PC-3 (cell line): ENCODE measurements at regions of chr2 and their contacts with region 1.

Region 1: GRCh38 chr2:72887754-72888437 is 688 bp downstream of the SPR start:
- DNase-seq: peak; percentile 91
- ATAC-seq: peak; percentile 64
- H3K4me3 ChIP-seq: peak overlapping the region; percentile 92
- H3K27ac ChIP-seq: peak overlapping the region; percentile 60
- H3K4me1 ChIP-seq: peaks cover 26% of the 10 kb centered on the region
- H3K27me3 ChIP-seq: no peaks in the 10 kb centered on the region
- CTCF ChIP-seq: peak; percentile 90

Region 2: DNA sequence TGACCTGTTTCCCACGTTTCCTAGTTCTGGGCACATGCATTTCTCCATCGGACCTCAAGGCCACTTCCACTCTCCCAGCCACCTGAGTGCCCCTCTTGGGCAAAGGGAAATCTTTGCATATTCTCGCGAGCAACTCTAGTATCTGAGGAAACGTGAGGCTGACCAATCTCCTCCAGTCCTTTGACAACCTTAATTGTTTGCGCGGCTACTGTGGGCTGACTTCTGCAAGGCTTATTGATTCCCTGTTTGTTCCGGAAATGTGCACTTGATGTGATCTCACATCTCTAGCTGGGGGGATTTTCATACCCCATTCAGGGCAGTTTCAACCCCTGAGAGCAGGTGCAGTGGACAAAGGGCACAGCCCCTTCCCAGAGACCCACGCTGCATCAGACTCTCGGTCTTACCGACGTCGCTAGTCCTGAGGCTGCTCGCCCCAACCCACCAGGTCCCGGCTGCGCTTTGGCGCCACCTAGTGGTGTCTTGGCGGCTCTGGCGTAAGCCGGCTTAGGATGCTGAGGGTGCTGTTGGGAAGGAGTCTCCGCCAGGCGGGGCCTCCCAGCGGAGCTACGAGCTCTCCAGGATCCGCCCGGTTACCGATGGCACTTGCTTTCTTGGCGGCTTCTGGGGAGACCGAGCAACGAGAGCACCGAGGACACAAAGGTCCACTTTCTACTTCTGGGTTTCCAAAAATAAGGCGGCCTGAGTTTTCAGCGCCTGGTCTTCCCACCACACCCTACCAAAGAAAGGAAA is 25.5 kb before region 1 on chr2:
- CTCF ChIA-PET with region 1: interaction called, 5 read pairs
- POLR2A ChIA-PET with region 1: no interaction called
- intact Hi-C with region 1: loop called (anchors 2 kb)
- DNase-seq: peak; percentile 97
- ATAC-seq: peak; percentile 96
- H3K4me3 ChIP-seq: peak overlapping the region; percentile 71
- H3K27ac ChIP-seq: no peak overlapping the region
- H3K4me1 ChIP-seq: peaks cover 19% of the 10 kb centered on the region
- H3K27me3 ChIP-seq: 0 out of 2 replicates have a peak, but pooled peaks cover 7% of the 10 kb centered on the region
- CTCF ChIP-seq: peak; percentile 97

Region 3: GRCh38 chr2:72934683-72935610 is 47.1 kb after region 1 on chr2:
- CTCF ChIA-PET with region 1: interaction called, 3 read pairs
- POLR2A ChIA-PET with region 1: no interaction called
- intact Hi-C with region 1: loop called (anchors 1 kb)
- DNase-seq: peak; percentile 51
- ATAC-seq: peak; percentile 31
- H3K4me3 ChIP-seq: no peak overlapping the region
- H3K27ac ChIP-seq: no peak overlapping the region
- H3K4me1 ChIP-seq: peaks cover 9% of the 10 kb centered on the region
- H3K27me3 ChIP-seq: no peaks in the 10 kb centered on the region
- CTCF ChIP-seq: peak; percentile 61

Region 4: GRCh38 chr2:72989770-72990556 is 102.1 kb after region 1 on chr2:
- CTCF ChIA-PET with region 1: no interaction called
- POLR2A ChIA-PET with region 1: no interaction called
- intact Hi-C with region 1: no loop called
- DNase-seq: no peak
- ATAC-seq: no peak
- H3K4me3 ChIP-seq: no peak overlapping the region
- H3K27ac ChIP-seq: no peak overlapping the region
- H3K4me1 ChIP-seq: no peaks in the 10 kb centered on the region
- H3K27me3 ChIP-seq: no peaks in the 10 kb centered on the region
- CTCF ChIP-seq: no peak

Region 5: DNA sequence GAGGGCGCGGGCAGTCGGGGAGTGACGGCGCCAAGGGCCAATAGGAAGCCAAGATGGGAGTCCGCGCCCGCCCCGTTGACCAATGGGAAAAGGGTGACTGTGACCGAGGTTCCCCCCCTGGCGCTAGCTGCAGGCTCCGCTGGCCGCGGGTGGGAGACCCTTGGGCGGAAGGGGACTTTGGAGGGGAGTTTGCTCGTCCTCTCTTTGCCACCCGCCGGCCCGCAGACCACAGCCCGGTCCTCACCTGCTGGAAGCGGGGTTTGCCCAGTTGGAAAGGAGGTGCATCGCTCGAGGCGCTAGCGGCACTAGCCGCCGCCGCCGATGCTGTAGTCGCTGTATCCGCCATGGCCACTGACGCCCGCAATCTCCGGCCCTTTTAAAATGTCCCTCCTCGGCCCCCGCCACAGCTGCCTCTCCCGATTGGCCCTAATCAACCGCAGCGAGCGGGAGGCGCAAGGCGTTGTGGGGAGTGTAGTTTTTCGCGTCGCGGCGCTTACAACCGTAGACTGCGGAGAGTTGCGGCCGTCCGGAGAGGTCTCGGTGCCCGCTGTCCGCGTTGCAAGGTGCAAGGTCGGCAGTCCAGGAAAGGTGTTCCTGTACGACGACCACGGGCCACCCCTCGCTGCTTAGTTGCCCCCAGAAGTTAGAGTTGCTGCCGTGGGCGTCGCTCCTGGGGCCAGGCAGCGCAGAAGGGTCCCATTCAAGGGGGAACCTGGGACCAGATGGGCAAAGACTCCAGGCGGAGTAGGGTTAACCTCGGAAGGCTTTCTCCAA is 183.7 kb after region 1 on chr2 and contains the start of gene SFXN5:
- CTCF ChIA-PET with region 1: no interaction called
- POLR2A ChIA-PET with region 1: no interaction called
- intact Hi-C with region 1: loop called (anchors 5 kb)
- DNase-seq: peak; percentile 94
- ATAC-seq: peak; percentile 91
- H3K4me3 ChIP-seq: peak within 1 kb of the TSS; percentile 99
- H3K27ac ChIP-seq: peak within 1 kb of the TSS; percentile 63
- H3K4me1 ChIP-seq: peaks cover 22% of the 10 kb centered on the region
- H3K27me3 ChIP-seq: no peaks in the 10 kb centered on the region
- CTCF ChIP-seq: no peak
- total RNA-seq, gene SFXN5: 22.0 and 30.7 TPM in 2 replicates

Region 6: DNA sequence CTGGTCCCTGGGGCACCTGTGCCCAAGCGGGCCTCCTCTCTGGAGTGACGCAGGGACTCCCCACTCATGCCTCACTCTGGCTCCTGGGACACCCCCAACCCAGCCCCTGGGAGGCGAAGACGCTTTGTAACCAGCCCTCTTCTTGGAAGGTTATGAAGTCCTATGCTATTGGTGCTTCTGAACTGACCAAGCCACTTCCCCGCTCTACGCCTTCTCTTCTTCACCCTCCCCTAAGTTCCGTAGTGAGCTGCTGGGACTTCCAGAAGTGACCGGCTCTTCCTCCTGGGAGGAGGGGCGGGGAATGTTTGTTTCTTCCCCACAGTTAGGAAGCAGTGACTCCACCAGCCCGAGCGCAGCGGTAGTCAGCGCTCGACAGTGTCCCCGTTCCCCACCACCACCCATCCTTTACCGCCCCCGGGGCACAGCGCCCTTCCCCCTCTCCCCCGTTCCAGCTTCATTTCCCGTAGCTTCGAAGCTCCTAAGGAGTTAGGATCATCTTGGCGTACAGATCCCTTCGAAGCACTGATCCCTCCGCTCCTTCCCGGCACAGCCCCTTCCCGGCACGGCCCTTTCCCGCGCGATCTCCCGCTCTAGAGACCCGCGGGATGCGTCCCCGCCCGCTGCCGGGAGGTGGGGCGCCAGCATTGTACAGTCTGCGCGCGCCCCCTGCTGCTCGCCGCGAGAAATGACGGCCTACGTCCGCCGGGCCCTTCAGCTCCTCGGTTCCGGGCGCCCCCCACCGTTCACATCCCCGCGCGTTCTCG is 289.2 kb after region 1 on chr2:
- CTCF ChIA-PET with region 1: interaction called, 16 read pairs
- POLR2A ChIA-PET with region 1: no interaction called
- intact Hi-C with region 1: loop called (anchors 1 kb)
- DNase-seq: peak; percentile 85
- ATAC-seq: peak; percentile 82
- H3K4me3 ChIP-seq: peak overlapping the region; percentile 75
- H3K27ac ChIP-seq: no peak overlapping the region
- H3K4me1 ChIP-seq: peaks cover 22% of the 10 kb centered on the region
- H3K27me3 ChIP-seq: peaks cover 27% of the 10 kb centered on the region
- CTCF ChIP-seq: peak; percentile 98